Activated naive CD4-positive, alpha-beta T cell treated with anti-CD3 and anti-CD28 coated beads for 36 hours (primary cell): ENCODE measurements at regions of chr15 and their contacts with region 1.

Region 1: GRCh38 chr15:94206463-94207167 is 24.7 kb upstream of the MCTP2 start:
- DNase-seq: peak; percentile 70
- H3K4me3 Mint-ChIP-seq: no peak overlapping the region
- H3K27ac Mint-ChIP-seq: peak overlapping the region; percentile 69
- H3K4me1 Mint-ChIP-seq: peaks cover 15% of the 10 kb centered on the region
- H3K27me3 Mint-ChIP-seq: peaks cover 24% of the 10 kb centered on the region

Region 2: GRCh38 chr15:94174399-94174802 is 32.2 kb before region 1 on chr15:
- CTCF ChIA-PET with region 1: no interaction called
- intact Hi-C with region 1: loop called (anchors 1 kb)
- DNase-seq: peak; percentile 26
- H3K4me3 Mint-ChIP-seq: no peak overlapping the region
- H3K27ac Mint-ChIP-seq: peak overlapping the region; percentile 10
- H3K4me1 Mint-ChIP-seq: peaks cover 19% of the 10 kb centered on the region
- H3K27me3 Mint-ChIP-seq: peaks cover 6% of the 10 kb centered on the region

Region 3: DNA sequence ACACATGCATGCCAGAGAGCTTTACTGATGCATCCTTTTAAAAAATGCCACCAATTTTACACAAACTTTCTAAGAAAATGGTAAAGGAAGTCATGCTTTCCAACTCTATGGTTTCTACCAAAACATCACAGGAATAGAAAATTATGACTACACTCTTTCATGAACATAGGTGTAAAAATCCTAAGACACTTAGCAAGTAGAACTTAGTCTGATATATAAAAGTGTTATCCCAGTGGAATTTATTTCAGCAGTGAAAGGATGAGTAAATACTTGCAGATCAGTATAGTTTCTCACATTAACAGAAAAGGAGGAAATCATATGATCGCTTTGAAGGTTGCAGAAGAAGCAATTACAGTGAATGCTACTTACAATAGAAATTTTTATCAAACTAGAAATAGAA is 68.1 kb after region 1 on chr15:
- CTCF ChIA-PET with region 1: no interaction called
- intact Hi-C with region 1: loop called (anchors 2 kb)
- DNase-seq: no peak
- H3K4me3 Mint-ChIP-seq: no peak overlapping the region
- H3K27ac Mint-ChIP-seq: no peak overlapping the region
- H3K4me1 Mint-ChIP-seq: peaks cover 29% of the 10 kb centered on the region
- H3K27me3 Mint-ChIP-seq: no peaks in the 10 kb centered on the region

Region 4: DNA sequence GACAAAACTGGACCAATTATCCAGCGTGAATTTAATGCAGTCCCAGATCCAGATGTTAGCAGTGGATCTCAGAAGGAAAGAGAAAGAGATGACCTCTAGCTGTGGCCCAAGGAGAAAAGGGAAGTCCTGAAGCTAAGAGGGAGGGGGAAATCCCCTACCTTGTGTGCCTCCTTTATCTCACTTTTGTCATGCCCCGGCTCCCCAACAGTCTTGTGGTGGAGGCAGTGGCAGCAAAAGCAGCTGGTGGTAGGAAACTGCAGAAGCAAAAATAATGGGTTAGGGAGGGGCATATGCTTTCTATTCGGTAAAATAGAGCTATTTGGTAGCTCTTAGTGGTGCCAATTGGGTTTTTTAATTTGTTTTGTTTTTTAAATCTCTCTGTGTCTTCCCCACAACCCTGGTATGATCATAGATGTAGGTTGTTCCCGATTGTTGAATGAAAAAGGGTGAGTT is 81.2 kb after region 1 on chr15:
- CTCF ChIA-PET with region 1: no interaction called
- intact Hi-C with region 1: no loop called
- DNase-seq: peak; percentile 71
- H3K4me3 Mint-ChIP-seq: no peak overlapping the region
- H3K27ac Mint-ChIP-seq: no peak overlapping the region
- H3K4me1 Mint-ChIP-seq: peaks cover 37% of the 10 kb centered on the region
- H3K27me3 Mint-ChIP-seq: peaks cover 3% of the 10 kb centered on the region

Region 5: GRCh38 chr15:94561036-94561689 is 354.5 kb after region 1 on chr15:
- CTCF ChIA-PET with region 1: no interaction called
- intact Hi-C with region 1: no loop called
- DNase-seq: no peak
- H3K4me3 Mint-ChIP-seq: no peak overlapping the region
- H3K27ac Mint-ChIP-seq: no peak overlapping the region
- H3K4me1 Mint-ChIP-seq: no peaks in the 10 kb centered on the region
- H3K27me3 Mint-ChIP-seq: peaks cover 12% of the 10 kb centered on the region